Panc1 (cell line): ENCODE measurements at regions of chr10 and their contacts with region 1.

Region 1: GRCh38 chr10:26903431-26904217 is 42.9 kb upstream of the ABI1 start:
- DNase-seq: no peak
- ATAC-seq: no peak
- H3K4me3 ChIP-seq: no peak overlapping the region
- H3K27ac ChIP-seq: no peak overlapping the region
- H3K4me1 ChIP-seq: no peaks in the 10 kb centered on the region
- H3K27me3 ChIP-seq: no peaks in the 10 kb centered on the region
- CTCF ChIP-seq: no peak

Region 2: GRCh38 chr10:26675873-26676257 is 227.8 kb before region 1 on chr10:
- CTCF ChIA-PET with region 1: no interaction called
- POLR2A ChIA-PET with region 1: interaction called, 10 read pairs
- in situ Hi-C with region 1: no loop called
- intact Hi-C with region 1: no loop called
- DNase-seq: no peak
- ATAC-seq: no peak
- H3K4me3 ChIP-seq: no peak overlapping the region
- H3K27ac ChIP-seq: no peak overlapping the region
- H3K4me1 ChIP-seq: no peaks in the 10 kb centered on the region
- H3K27me3 ChIP-seq: no peaks in the 10 kb centered on the region
- CTCF ChIP-seq: no peak